ENCODE measurements at regions of chr3 and their contacts with region 1.

Region 1: DNA sequence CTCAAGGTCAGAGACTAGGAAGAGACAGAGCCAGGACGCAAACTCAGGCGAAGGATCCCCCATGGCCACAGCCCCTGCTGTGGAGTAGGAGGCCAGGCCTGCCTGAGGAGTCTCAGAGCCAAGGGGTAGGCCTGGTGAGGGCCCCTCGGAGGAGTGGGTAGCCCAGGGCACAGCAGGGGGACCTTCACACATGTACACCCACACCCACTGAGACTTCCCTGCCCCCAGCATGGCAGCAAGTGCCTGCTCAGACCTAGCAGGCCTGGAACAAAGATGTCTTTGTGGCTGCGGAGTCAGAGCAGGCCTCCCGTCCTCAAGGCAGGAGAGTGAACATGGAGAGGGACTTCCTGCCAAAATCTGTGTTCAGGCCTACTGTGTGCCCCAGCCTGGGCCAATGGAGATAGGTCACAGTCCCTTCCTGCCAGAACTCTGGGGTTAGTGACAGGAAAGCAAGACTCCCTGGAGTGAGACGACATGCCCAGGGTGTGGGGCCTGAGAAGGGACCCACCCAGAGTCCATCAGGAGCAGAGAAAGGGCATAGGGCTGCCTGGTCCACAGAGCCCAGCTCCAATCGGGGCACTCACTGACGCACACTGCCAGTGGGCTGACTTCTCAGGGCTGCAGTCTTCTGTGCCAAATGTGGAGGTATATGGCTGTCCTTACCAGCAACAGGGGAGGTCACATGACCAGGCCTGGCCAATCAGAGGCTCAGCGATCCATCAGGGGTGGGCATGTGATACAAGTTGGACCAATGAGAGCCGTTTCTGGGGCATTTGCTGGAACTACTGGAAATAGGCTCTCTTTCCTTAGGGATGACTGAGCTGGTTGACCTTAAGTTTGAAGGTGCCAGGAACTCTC is 2.3 kb downstream of the GRIP2 start:
- DNase-seq: peak in 4 of 5 donors; percentile 54 to 77 (median 66)
- ATAC-seq: peak in 3 of 4 donors; percentile 47 to 53 (median 49)
- H3K4me3 ChIP-seq: peak overlapping the region in 2 of 12 donors; percentile 11 to 21
- H3K27ac ChIP-seq: peak overlapping the region in 11 of 12 donors; percentile 49 to 95 (median 88)
- H3K4me1 ChIP-seq: peaks cover 0 to 78% (median 54%) of the 10 kb centered on the region in 12 donors
- H3K27me3 ChIP-seq: peaks cover 0 to 3% (median 0%) of the 10 kb centered on the region in 9 donors
- CTCF ChIP-seq: no peak
- POLR2A ChIP-seq: no peak

Region 2: DNA sequence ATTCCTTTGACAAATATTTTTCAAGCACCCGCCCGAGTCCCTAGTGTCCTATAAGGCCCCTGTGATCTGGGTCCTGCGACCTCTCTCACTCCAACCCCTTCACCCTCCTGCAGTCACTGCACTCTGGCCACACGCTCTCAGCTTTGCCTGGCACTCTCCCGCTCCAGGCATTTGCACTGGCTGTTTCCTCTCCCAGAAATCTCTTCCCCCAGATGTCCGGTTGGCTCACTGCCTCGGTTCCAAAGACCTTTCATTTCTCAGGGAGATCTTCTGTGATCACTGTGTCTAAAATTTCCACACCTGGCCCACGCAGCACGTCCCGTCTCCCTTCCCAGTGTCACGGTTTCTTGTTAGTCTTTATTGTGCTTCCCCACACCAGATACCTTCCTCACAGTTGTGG is 755.3 kb before region 1 on chr3:
- intact Hi-C with region 1: no loop called
- DNase-seq: peak in 1 of 5 donors; percentile 58
- ATAC-seq: peak in 2 of 4 donors; percentile 42 to 51
- H3K4me3 ChIP-seq: peak overlapping the region in 4 of 12 donors; percentile 5 to 24 (median 10)
- H3K27ac ChIP-seq: no peak overlapping the region
- H3K4me1 ChIP-seq: peaks cover 0 to 12% (median 0%) of the 10 kb centered on the region in 12 donors
- H3K27me3 ChIP-seq: peaks cover 0 to 46% (median 13%) of the 10 kb centered on the region in 9 donors
- CTCF ChIP-seq: no peak
- POLR2A ChIP-seq: no peak

Region 3: GRCh38 chr3:14525685-14526631 is 11.9 kb before region 1 on chr3:
- intact Hi-C with region 1: loop called in 3 of 10 experiments (anchors 2 kb)
- DNase-seq: peak in 2 of 5 donors; percentile 35 to 51
- ATAC-seq: no peak
- H3K4me3 ChIP-seq: peak overlapping the region in 8 of 12 donors; percentile 7 to 48 (median 18)
- H3K27ac ChIP-seq: peak overlapping the region; percentile 9 to 96 (median 90)
- H3K4me1 ChIP-seq: peaks cover 0 to 61% (median 45%) of the 10 kb centered on the region in 12 donors
- H3K27me3 ChIP-seq: no peaks in the 10 kb centered on the region
- CTCF ChIP-seq: no peak
- POLR2A ChIP-seq: no peak

Measured in heart left ventricle (tissue), 16 donors.